ENCODE measurements at regions of chr17 and their contacts with region 1.

Region 1: GRCh38 chr17:74961657-74962490 is 10.7 kb downstream of the HID1 start:
- DNase-seq: peak; percentile 76 to 80 (median 77)
- H3K4me3 ChIP-seq: no peak overlapping the region
- H3K4me3 Mint-ChIP-seq: peak overlapping the region in 1 of 8 donors; percentile 31
- H3K27ac ChIP-seq: no peak overlapping the region
- H3K27ac Mint-ChIP-seq: peak overlapping the region in 2 of 7 donors; percentile 59 to 66
- H3K4me1 ChIP-seq: peaks cover 6% of the 10 kb centered on the region
- H3K4me1 Mint-ChIP-seq: peaks cover 4 to 13% (median 8%) of the 10 kb centered on the region in 4 donors
- H3K27me3 ChIP-seq: no peaks in the 10 kb centered on the region
- H3K27me3 Mint-ChIP-seq: no peaks in the 10 kb centered on the region

Region 2: DNA sequence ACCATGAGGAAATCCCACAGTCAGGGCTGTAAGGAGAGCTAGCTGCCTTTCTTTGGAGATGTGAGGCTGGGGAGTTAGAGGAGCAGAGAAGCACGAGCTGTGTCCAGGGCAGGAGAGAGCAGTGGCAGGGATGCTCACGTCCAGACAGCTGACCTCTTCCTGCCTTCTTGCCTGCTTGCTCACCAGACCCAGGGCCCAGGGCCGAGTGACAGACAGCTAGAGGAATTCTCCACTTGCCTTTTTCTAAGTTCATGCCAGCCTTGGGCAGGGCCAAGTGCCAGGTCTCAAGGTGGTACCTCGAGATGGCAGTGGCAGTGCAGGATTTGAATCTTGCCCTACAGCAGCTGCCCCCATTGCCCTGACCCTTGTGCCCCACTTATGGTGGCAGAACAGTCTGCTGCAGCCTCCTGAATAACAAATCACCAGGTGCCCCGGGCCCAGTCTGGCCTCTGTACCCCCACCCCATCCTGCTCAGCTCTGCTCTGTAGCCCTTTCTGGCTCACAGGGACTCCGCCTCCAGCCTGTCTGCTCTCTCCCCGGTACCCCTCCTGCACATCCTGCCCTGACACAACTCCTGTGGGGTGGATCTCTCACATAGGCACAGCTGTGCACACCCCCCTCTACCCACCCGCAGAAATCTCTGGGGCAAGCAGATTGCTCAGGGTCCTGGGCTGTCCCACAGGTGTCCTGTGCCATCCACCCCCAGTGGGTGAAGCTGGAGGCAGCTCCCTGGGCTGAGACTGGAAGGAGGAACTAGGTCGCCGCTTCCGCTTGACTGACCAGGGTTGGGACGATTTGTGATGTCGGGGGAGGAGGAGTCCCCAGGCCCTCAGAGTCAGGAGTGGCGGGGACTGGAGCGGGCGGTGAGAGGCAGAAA is 128.1 kb before region 1 on chr17:
- CTCF ChIA-PET with region 1: no interaction called
- POLR2A ChIA-PET with region 1: no interaction called
- intact Hi-C with region 1: no loop called
- DNase-seq: peak in 1 of 5 donors; percentile 16
- H3K4me3 ChIP-seq: no peak overlapping the region
- H3K4me3 Mint-ChIP-seq: no peak overlapping the region
- H3K27ac ChIP-seq: no peak overlapping the region
- H3K27ac Mint-ChIP-seq: no peak overlapping the region
- H3K4me1 ChIP-seq: no peaks in the 10 kb centered on the region
- H3K4me1 Mint-ChIP-seq: no peaks in the 10 kb centered on the region
- H3K27me3 ChIP-seq: no peaks in the 10 kb centered on the region
- H3K27me3 Mint-ChIP-seq: no peaks in the 10 kb centered on the region

Region 3: GRCh38 chr17:74950207-74950606 is 11.7 kb before region 1 on chr17:
- CTCF ChIA-PET with region 1: interaction called, 10 read pairs
- POLR2A ChIA-PET with region 1: no interaction called
- intact Hi-C with region 1: no loop called
- DNase-seq: no peak
- H3K4me3 ChIP-seq: no peak overlapping the region
- H3K4me3 Mint-ChIP-seq: peak overlapping the region in 1 of 8 donors; percentile 6
- H3K27ac ChIP-seq: no peak overlapping the region
- H3K27ac Mint-ChIP-seq: no peak overlapping the region
- H3K4me1 ChIP-seq: no peaks in the 10 kb centered on the region
- H3K4me1 Mint-ChIP-seq: no peaks in the 10 kb centered on the region
- H3K27me3 ChIP-seq: no peaks in the 10 kb centered on the region
- H3K27me3 Mint-ChIP-seq: peaks cover 0 to 4% of the 10 kb centered on the region in 2 donors

Region 4: GRCh38 chr17:74987418-74987908 is 25.6 kb after region 1 on chr17 and contains the start of gene CDR2L:
- CTCF ChIA-PET with region 1: interaction called, 20 read pairs
- POLR2A ChIA-PET with region 1: interaction called, 5 read pairs
- intact Hi-C with region 1: no loop called
- DNase-seq: peak; percentile 89 to 91 (median 90)
- H3K4me3 ChIP-seq: peak within 1 kb of the TSS in 1 of 2 donors; percentile 61
- H3K4me3 Mint-ChIP-seq: peak within 1 kb of the TSS; percentile 84 to 94 (median 90)
- H3K27ac ChIP-seq: no peak within 1 kb of the TSS
- H3K27ac Mint-ChIP-seq: peak within 1 kb of the TSS; percentile 3 to 84 (median 72)
- H3K4me1 ChIP-seq: peaks cover 17% of the 10 kb centered on the region
- H3K4me1 Mint-ChIP-seq: peaks cover 6 to 22% (median 12%) of the 10 kb centered on the region in 4 donors
- H3K27me3 ChIP-seq: no peaks in the 10 kb centered on the region
- H3K27me3 Mint-ChIP-seq: peaks cover 2% of the 10 kb centered on the region in 2 donors
- total RNA-seq, gene CDR2L: 0.08 to 0.20 TPM

Region 5: GRCh38 chr17:75024686-75025397 is 63.0 kb after region 1 on chr17:
- CTCF ChIA-PET with region 1: interaction called, 18 read pairs
- POLR2A ChIA-PET with region 1: no interaction called
- intact Hi-C with region 1: no loop called
- DNase-seq: peak; percentile 29 to 56 (median 41)
- H3K4me3 ChIP-seq: no peak overlapping the region
- H3K4me3 Mint-ChIP-seq: peak overlapping the region in 5 of 8 donors; percentile 59 to 73 (median 70)
- H3K27ac ChIP-seq: no peak overlapping the region
- H3K27ac Mint-ChIP-seq: peak overlapping the region in 5 of 7 donors; percentile 36 to 86 (median 77)
- H3K4me1 ChIP-seq: peaks cover 11% of the 10 kb centered on the region
- H3K4me1 Mint-ChIP-seq: peaks cover 10 to 19% (median 14%) of the 10 kb centered on the region in 4 donors
- H3K27me3 ChIP-seq: no peaks in the 10 kb centered on the region
- H3K27me3 Mint-ChIP-seq: no peaks in the 10 kb centered on the region

Region 6: GRCh38 chr17:75173526-75173925 is 211.7 kb after region 1 on chr17:
- CTCF ChIA-PET with region 1: interaction called, 35 read pairs
- POLR2A ChIA-PET with region 1: interaction called, 7 read pairs
- intact Hi-C with region 1: loop called (anchors 1 kb)
- DNase-seq: no peak
- H3K4me3 ChIP-seq: no peak overlapping the region
- H3K4me3 Mint-ChIP-seq: no peak overlapping the region
- H3K27ac ChIP-seq: no peak overlapping the region
- H3K27ac Mint-ChIP-seq: peak overlapping the region in 4 of 7 donors; percentile 29 to 75 (median 38)
- H3K4me1 ChIP-seq: peaks cover 9% of the 10 kb centered on the region
- H3K4me1 Mint-ChIP-seq: peaks cover 7 to 26% (median 11%) of the 10 kb centered on the region in 4 donors
- H3K27me3 ChIP-seq: no peaks in the 10 kb centered on the region
- H3K27me3 Mint-ChIP-seq: no peaks in the 10 kb centered on the region

Measured in CD4-positive, alpha-beta memory T cell (primary cell).